Activated CD4-positive, alpha-beta T cell treated with anti-CD3 and anti-CD28 coated beads, Interleukin-2, amount 10 ng/mL, durations not matched to agents 24 days and 14 days (primary cell): ENCODE measurements at regions of chr17 and their contacts with region 1.

Region 1: DNA sequence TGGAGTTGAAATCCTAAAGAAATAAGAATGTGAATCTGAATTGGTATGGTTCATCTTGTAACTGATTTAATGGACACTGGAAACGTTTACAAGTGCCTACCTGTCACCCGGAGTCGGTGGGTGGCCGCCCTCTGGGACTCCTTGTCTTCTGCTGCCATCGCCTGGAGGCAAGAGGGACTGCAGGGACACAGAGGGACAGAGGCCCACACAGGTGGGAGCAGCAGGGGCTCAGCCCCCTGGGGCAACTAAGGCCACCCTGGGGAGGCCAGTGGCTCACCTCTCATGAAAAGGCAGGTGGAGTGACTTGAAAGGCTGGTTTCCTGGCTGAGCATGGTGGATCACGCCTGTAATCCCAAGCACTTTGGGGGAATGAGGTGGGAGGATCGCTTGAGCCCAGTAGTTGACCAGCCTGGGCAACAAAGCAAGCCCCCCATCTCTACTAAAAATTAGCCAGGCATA is 23.2 kb downstream of the TMEM92 start:
- DNase-seq: peak; percentile 95
- H3K4me3 Mint-ChIP-seq: no peak overlapping the region
- H3K27ac Mint-ChIP-seq: no peak overlapping the region
- H3K4me1 Mint-ChIP-seq: peaks cover 8% of the 10 kb centered on the region
- H3K27me3 Mint-ChIP-seq: no peaks in the 10 kb centered on the region

Region 2: GRCh38 chr17:50094753-50095619 is 202.4 kb before region 1 on chr17 and contains the start of gene PDK2:
- intact Hi-C with region 1: loop called (anchors 1 kb)
- DNase-seq: peak; percentile 99
- H3K4me3 Mint-ChIP-seq: peak within 1 kb of the TSS; percentile 89
- H3K27ac Mint-ChIP-seq: peak within 1 kb of the TSS; percentile 93
- H3K4me1 Mint-ChIP-seq: peaks cover 24% of the 10 kb centered on the region
- H3K27me3 Mint-ChIP-seq: no peaks in the 10 kb centered on the region
- total RNA-seq, gene PDK2: 10.9 and 11.8 TPM in 2 replicates

Region 3: GRCh38 chr17:50169121-50169764 is 128.2 kb before region 1 on chr17:
- intact Hi-C with region 1: loop called (anchors 1 kb)
- DNase-seq: peak; percentile 89
- H3K4me3 Mint-ChIP-seq: peak overlapping the region; percentile 34
- H3K27ac Mint-ChIP-seq: peak overlapping the region; percentile 65
- H3K4me1 Mint-ChIP-seq: peaks cover 12% of the 10 kb centered on the region
- H3K27me3 Mint-ChIP-seq: peaks cover 3% of the 10 kb centered on the region

Region 4: DNA sequence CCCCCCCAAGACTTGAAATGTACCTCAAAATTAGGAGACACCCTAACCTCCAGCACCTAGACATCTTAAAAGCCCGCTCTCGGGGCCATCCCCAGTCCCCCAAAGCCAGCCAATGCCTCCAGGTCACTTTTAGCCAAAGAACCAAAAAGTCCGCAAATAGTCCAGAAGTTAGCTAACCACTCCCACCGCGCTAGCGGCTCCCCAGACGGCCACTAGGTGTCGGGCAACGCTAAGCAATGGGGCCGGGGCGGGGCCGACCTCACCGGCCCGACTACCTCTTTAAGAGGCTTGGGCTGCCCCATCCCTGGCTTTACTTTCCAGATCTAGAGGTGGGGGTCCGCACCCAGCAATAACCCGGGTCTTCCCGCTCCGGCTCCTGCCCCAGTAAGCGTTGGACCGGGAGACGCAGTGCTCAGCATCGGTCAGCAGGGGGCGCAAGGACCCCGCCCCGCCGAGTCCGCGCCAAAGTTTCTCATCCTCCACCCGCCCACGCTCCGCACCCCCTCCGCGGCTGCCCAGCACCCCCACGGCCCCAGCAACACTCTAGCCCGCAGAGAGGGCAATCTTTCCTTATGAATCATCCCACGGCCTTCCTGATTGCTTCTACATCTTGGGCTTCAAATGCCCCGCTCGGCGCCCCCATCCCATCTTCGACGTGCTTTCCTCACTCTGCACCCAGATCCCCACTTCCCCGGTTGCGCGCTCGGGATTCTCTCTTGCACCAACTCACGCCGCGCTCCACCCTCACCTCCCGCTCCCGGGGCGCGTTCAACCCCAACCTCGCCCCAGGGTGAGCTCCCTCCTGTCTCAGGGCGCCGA is 96.8 kb before region 1 on chr17:
- intact Hi-C with region 1: loop called (anchors 1 kb)
- DNase-seq: peak; percentile 95
- H3K4me3 Mint-ChIP-seq: peak overlapping the region; percentile 80
- H3K27ac Mint-ChIP-seq: peak overlapping the region; percentile 4
- H3K4me1 Mint-ChIP-seq: peaks cover 13% of the 10 kb centered on the region
- H3K27me3 Mint-ChIP-seq: peaks cover 58% of the 10 kb centered on the region

Region 5: DNA sequence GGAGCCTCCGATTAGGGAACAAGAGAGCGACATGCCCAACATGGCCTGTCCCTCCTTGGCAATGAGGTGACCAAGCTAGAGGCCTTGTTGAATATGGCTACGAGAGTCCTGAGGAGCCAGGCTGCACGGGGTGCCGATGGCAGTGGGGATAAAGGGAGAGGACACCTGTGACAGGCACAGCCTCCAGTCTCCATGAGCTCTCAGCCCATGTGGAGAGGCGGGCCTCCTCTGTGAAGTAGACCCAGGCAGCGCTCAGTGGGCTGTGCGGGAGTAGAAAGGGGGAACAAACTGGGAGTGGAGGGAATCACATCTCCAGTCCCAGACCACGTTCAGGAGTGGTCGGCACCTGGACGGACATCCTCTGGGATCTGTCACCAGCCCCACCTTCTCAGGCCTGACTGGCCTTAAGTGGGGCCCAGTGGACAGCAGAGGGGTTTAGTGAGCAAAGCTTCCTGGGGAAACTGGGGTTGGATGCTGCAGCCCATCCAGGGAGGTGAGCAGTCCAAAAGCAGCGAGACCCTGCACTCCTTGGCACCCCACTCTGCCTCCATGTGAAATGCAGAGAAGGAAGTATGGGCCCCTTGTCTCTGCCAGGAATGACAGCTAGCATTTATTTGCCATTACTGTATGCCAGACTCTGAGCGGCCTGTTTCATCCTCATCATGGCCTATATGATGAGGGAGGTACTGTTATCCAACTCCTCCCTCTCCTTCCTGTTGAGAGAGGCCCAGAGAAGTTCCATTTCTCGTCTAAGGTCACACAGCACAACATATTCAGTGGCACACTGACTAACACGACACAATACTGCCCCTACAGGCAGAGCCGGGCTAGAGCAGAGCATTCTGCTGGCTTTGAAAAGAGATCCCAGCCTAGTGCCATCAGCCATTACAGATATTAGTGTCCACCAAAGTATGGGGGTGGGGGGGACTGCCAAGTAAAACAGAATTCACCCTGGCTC is 27.7 kb before region 1 on chr17:
- intact Hi-C with region 1: loop called (anchors 1 kb)
- DNase-seq: peak; percentile 91
- H3K4me3 Mint-ChIP-seq: no peak overlapping the region
- H3K27ac Mint-ChIP-seq: no peak overlapping the region
- H3K4me1 Mint-ChIP-seq: peaks cover 17% of the 10 kb centered on the region
- H3K27me3 Mint-ChIP-seq: peaks cover 10% of the 10 kb centered on the region